CD4-positive, alpha-beta memory T cell (primary cell): ENCODE measurements at regions of chrX and their contacts with region 1.

Region 1: GRCh38 chrX:16870095-16870860 is at the start of gene RBBP7:
- DNase-seq: peak; percentile 91 to 98 (median 96)
- H3K4me3 ChIP-seq: peak within 1 kb of the TSS; percentile 57 to 65
- H3K4me3 Mint-ChIP-seq: peak within 1 kb of the TSS; percentile 94 to 98 (median 96)
- H3K27ac ChIP-seq: peak within 1 kb of the TSS; percentile 77
- H3K27ac Mint-ChIP-seq: peak within 1 kb of the TSS; percentile 91 to 99 (median 98)
- H3K4me1 ChIP-seq: peaks cover 40% of the 10 kb centered on the region
- H3K4me1 Mint-ChIP-seq: peaks cover 25 to 45% (median 32%) of the 10 kb centered on the region in 4 donors
- H3K27me3 ChIP-seq: no peaks in the 10 kb centered on the region
- H3K27me3 Mint-ChIP-seq: peaks cover 2 to 7% of the 10 kb centered on the region in 2 donors
- total RNA-seq, gene RBBP7: 90.5 to 97.4 TPM

Region 2: GRCh38 chrX:16719334-16720084 is 150.8 kb before region 1 on chrX and contains the start of gene SYAP1:
- CTCF ChIA-PET with region 1: no interaction called
- POLR2A ChIA-PET with region 1: interaction called, 3 read pairs
- intact Hi-C with region 1: loop called (anchors 5 kb)
- DNase-seq: peak; percentile 91 to 100 (median 97)
- H3K4me3 ChIP-seq: peak within 1 kb of the TSS; percentile 54 to 84
- H3K4me3 Mint-ChIP-seq: peak within 1 kb of the TSS; percentile 89 to 99 (median 95)
- H3K27ac ChIP-seq: peak within 1 kb of the TSS; percentile 95
- H3K27ac Mint-ChIP-seq: peak within 1 kb of the TSS; percentile 99 to 100 (median 99)
- H3K4me1 ChIP-seq: peaks cover 8% of the 10 kb centered on the region
- H3K4me1 Mint-ChIP-seq: peaks cover 13 to 55% (median 37%) of the 10 kb centered on the region in 4 donors
- H3K27me3 ChIP-seq: no peaks in the 10 kb centered on the region
- H3K27me3 Mint-ChIP-seq: no peaks in the 10 kb centered on the region
- total RNA-seq, gene SYAP1: 13.9 to 15.4 TPM

Region 3: DNA sequence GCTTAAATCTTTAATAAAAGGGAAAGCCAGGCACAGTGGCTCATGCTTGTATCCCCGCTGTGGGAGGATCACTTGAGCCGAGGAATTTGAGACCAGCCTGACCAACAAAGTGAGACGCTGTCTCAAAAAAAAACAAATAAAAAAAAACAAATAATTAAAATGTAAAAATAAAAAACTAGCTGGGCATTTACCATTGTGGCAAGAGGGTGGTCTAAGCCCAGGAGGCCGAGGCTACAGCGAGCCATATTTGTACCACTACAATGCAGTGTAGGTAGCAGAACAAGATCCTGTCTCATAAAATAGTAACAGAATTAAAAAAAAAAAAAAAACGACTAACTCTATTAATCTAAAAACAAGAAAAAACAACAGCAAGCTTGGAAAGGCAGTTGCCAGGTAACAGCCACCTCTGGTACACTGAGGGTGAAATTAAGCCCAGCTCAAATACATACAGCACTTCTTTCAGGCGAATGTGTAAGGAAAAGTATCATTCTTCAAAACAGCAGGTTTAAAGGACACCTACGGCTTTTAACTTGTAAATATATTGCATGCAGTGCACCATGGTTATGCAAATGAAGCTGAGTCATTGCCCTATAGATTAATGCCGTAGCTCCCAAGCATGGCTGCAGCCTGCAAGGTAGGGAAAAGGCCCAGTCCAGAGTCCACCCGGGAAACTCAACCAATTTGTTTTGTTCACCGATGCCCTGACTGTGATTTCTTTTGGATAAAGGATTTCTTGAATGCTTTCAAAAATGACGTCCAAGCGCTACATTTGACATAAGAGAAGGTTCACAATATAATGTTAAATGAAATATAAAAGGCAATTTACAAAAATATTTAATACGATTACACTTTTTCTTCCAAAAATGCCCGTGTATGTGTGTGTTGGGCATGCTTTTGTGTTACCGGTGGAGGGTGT is 98.5 kb before region 1 on chrX:
- CTCF ChIA-PET with region 1: no interaction called
- POLR2A ChIA-PET with region 1: no interaction called
- intact Hi-C with region 1: no loop called
- DNase-seq: no peak
- H3K4me3 ChIP-seq: no peak overlapping the region
- H3K4me3 Mint-ChIP-seq: no peak overlapping the region
- H3K27ac ChIP-seq: no peak overlapping the region
- H3K27ac Mint-ChIP-seq: no peak overlapping the region
- H3K4me1 ChIP-seq: no peaks in the 10 kb centered on the region
- H3K4me1 Mint-ChIP-seq: no peaks in the 10 kb centered on the region
- H3K27me3 ChIP-seq: no peaks in the 10 kb centered on the region
- H3K27me3 Mint-ChIP-seq: no peaks in the 10 kb centered on the region

Region 4: DNA sequence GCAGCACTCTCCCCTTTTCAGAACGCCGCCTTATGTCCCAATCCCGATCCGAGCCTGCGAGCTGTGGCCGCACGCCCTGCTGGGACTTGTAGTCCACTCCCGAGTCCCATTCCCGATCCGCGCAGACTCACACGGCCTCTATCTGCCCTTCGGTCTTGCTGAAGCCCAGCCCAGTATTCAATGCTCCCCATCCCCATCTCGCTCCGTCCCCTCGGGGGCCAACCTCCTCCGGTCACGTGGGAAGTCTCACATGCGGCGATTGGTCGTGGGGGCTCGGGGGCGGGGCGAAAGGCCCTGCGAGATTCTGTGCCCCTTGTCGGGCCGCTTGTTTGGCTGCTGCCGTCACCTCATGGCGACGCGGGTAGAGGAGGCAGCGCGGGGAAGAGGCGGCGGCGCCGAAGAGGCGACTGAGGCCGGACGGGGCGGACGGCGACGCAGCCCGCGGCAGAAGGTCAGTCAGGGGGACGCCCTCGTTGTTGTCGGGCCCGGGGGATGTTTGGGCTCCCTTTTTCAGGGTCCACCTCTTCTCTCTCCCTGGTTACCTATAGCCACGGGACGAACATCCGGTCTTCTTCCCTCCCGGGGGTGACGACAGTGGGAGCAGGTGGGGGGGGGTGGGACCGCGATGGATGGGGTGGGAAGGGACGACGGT is 84.0 kb before region 1 on chrX and contains the start of gene TXLNG:
- CTCF ChIA-PET with region 1: interaction called, 5 read pairs
- POLR2A ChIA-PET with region 1: no interaction called
- intact Hi-C with region 1: loop called (anchors 1 kb)
- DNase-seq: peak; percentile 97 to 99 (median 99)
- H3K4me3 ChIP-seq: peak within 1 kb of the TSS; percentile 63 to 70
- H3K4me3 Mint-ChIP-seq: peak within 1 kb of the TSS; percentile 92 to 96 (median 94)
- H3K27ac ChIP-seq: peak within 1 kb of the TSS; percentile 77
- H3K27ac Mint-ChIP-seq: peak within 1 kb of the TSS; percentile 78 to 96 (median 92)
- H3K4me1 ChIP-seq: peaks cover 12% of the 10 kb centered on the region
- H3K4me1 Mint-ChIP-seq: peaks cover 13 to 36% (median 21%) of the 10 kb centered on the region in 4 donors
- H3K27me3 ChIP-seq: no peaks in the 10 kb centered on the region
- H3K27me3 Mint-ChIP-seq: no peaks in the 10 kb centered on the region
- total RNA-seq, gene TXLNG: 17.8 to 19.8 TPM

Region 5: GRCh38 chrX:16882702-16883486 is 12.6 kb after region 1 on chrX:
- CTCF ChIA-PET with region 1: interaction called, 53 read pairs
- POLR2A ChIA-PET with region 1: interaction called, 44 read pairs
- intact Hi-C with region 1: no loop called
- DNase-seq: peak; percentile 55 to 70 (median 61)
- H3K4me3 ChIP-seq: peak overlapping the region in 1 of 2 donors; percentile 64
- H3K4me3 Mint-ChIP-seq: peak overlapping the region; percentile 70 to 90 (median 80)
- H3K27ac ChIP-seq: peak overlapping the region; percentile 38
- H3K27ac Mint-ChIP-seq: peak overlapping the region; percentile 22 to 78 (median 53)
- H3K4me1 ChIP-seq: peaks cover 11% of the 10 kb centered on the region
- H3K4me1 Mint-ChIP-seq: peaks cover 3 to 14% (median 9%) of the 10 kb centered on the region in 4 donors
- H3K27me3 ChIP-seq: no peaks in the 10 kb centered on the region
- H3K27me3 Mint-ChIP-seq: no peaks in the 10 kb centered on the region

Region 6: GRCh38 chrX:16946361-16946964 is 76.2 kb after region 1 on chrX and contains the start of gene REPS2:
- CTCF ChIA-PET with region 1: no interaction called
- POLR2A ChIA-PET with region 1: no interaction called
- intact Hi-C with region 1: loop called (anchors 5 kb)
- DNase-seq: peak; percentile 67 to 84 (median 73)
- H3K4me3 ChIP-seq: peak within 1 kb of the TSS in 1 of 2 donors; percentile 19
- H3K4me3 Mint-ChIP-seq: peak within 1 kb of the TSS; percentile 79 to 87 (median 86)
- H3K27ac ChIP-seq: no peak within 1 kb of the TSS
- H3K27ac Mint-ChIP-seq: peak within 1 kb of the TSS; percentile 46 to 87 (median 76)
- H3K4me1 ChIP-seq: no peaks in the 10 kb centered on the region
- H3K4me1 Mint-ChIP-seq: peaks cover 0 to 3% (median 0%) of the 10 kb centered on the region in 4 donors
- H3K27me3 ChIP-seq: no peaks in the 10 kb centered on the region
- H3K27me3 Mint-ChIP-seq: peaks cover 0 to 3% of the 10 kb centered on the region in 2 donors
- total RNA-seq, gene REPS2: 0.69 to 1.4 TPM